ENCODE measurements at regions of chr21 and their contacts with region 1.

Region 1: DNA sequence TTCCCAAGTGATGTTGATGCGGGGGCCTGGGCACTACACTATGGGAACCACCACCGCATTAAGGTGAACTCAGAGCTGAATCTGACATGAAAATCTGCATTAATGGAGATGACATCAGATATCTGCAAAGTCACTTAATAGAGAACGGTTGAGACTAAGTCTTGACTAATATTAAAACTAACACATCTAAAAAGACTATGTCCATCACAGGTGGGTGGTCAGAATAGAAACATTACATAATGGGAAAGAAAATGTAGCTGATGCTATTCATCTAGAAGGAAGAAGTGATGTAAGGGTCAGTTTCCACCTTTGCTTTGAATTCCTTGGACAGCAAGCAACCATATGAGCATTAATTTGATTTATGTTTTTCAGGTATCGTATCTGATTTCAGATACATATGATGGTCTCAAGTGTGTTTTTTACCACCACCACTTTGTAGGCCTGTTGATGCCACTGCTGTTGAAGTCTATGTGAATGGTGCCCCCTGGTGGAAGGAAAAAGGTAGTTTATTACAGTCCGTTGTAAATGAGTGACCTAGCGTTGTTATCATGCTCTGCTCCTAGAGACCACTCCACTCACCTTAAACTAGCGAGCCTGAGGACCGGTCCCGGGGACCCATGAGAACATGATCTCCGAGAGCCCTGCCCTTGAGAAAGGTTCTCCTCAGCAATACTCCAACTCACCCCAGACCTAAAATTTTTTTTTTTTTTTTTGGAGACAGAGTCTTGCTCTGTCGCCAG is 73.5 kb downstream of the BACH1 start:
- DNase-seq: peak in 31 of 42 donors; percentile 13 to 87 (median 56)

Region 2: GRCh38 chr21:29085106-29085752 is 287.0 kb before region 1 on chr21:
- intact Hi-C with region 1: loop called (anchors 5 kb)
- DNase-seq: no peak

Region 3: GRCh38 chr21:29318354-29318753 is 53.9 kb before region 1 on chr21:
- intact Hi-C with region 1: no loop called
- DNase-seq: no peak

Measured in head of caudate nucleus (tissue), 42 donors.